Heart right ventricle (tissue), 16 donors: ENCODE measurements at regions of chr1 and their contacts with region 1.

Region 1: GRCh38 chr1:235253219-235253962 is 74.6 kb downstream of the ARID4B start:
- DNase-seq: peak in 1 of 2 donors; percentile 64
- ATAC-seq: peak; percentile 78 to 96 (median 92)
- H3K4me3 ChIP-seq: no peak overlapping the region
- H3K27ac ChIP-seq: no peak overlapping the region
- H3K4me1 ChIP-seq: peaks cover 0 to 14% (median 0%) of the 10 kb centered on the region in 9 donors
- H3K27me3 ChIP-seq: no peaks in the 10 kb centered on the region
- CTCF ChIP-seq: peak; percentile 63 to 92 (median 89)

Region 2: DNA sequence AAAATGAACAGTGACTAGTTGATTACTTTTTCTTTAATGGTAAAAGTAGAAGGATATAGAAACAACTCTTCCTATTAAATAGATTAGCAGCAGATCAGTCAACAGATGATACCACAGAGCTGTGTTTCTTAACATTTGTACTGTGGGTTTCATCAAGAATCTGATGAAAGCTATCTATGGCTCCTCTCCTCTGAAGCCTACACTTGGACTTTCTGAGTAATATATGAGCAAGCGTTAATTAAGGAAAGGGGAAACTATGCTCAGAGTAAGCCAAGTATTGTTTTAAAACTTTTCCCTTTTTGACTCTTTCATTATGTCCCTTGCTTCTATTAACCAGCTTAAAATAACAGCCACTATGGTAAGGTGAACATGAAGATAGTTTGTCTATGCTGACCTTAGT is 63.8 kb after region 1 on chr1:
- intact Hi-C with region 1: loop called in 2 of 10 experiments (anchors 5 to 10 kb)
- DNase-seq: no peak
- ATAC-seq: no peak
- H3K4me3 ChIP-seq: no peak overlapping the region
- H3K27ac ChIP-seq: no peak overlapping the region
- H3K4me1 ChIP-seq: peaks cover 0 to 69% (median 35%) of the 10 kb centered on the region in 9 donors
- H3K27me3 ChIP-seq: no peaks in the 10 kb centered on the region
- CTCF ChIP-seq: no peak

Region 3: DNA sequence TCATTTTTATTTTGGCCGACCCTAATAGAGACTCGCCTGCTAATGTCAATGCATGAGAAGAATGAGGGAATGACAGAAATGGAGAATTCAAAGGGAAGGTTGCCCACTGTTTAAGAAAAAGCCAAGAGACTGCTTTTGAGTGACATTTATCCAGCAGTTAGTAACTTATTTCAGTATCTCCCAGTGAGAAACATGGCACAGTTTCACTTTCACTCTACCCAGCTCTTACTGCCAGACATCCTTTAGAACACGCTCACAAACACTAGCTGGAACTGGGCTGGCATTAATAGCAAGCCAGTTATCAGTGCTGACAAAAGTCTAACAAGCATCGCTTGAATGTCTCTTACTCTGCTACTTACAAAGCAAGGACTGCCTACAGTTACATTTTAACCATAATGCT is 83.5 kb after region 1 on chr1:
- intact Hi-C with region 1: loop called in 2 of 10 experiments (anchors 5 to 10 kb)
- DNase-seq: peak in 1 of 2 donors; percentile 18
- ATAC-seq: peak; percentile 65 to 98 (median 90)
- H3K4me3 ChIP-seq: peak overlapping the region in 1 of 10 donors; percentile 1
- H3K27ac ChIP-seq: peak overlapping the region in 4 of 10 donors; percentile 5 to 64 (median 26)
- H3K4me1 ChIP-seq: peaks cover 0 to 46% (median 30%) of the 10 kb centered on the region in 9 donors
- H3K27me3 ChIP-seq: no peaks in the 10 kb centered on the region
- CTCF ChIP-seq: no peak

Region 4: GRCh38 chr1:235423191-235423652 is 169.8 kb after region 1 on chr1:
- intact Hi-C with region 1: loop called in 3 of 10 experiments (anchors 5 kb)
- DNase-seq: no peak
- ATAC-seq: peak in 2 of 8 donors; percentile 9 to 36
- H3K4me3 ChIP-seq: no peak overlapping the region
- H3K27ac ChIP-seq: no peak overlapping the region
- H3K4me1 ChIP-seq: peaks cover 0 to 9% (median 0%) of the 10 kb centered on the region in 9 donors
- H3K27me3 ChIP-seq: no peaks in the 10 kb centered on the region
- CTCF ChIP-seq: no peak